B cell (primary cell): ENCODE measurements at regions of chr10 and their contacts with region 1.

Region 1: DNA sequence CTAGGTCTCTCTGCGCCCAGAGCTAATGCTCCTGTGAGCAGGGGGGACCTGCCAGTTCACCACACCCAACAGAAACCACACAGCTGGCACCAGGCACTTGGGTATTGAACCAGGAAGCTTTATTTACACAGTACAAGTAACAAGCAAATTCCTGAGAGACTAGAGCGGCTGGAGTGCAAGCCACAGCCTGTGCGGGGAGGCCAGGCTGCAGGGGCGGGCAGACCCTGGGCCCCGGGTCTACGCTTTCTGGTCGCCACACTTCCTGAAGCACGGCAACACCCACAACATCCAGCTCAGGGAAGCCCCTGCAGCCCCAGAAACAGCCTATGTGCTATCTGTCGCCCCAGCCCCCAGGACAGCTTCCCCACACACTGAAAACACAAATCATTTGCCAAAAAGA is 125.0 kb downstream of the FAM53B start:
- DNase-seq: peak; percentile 84
- ATAC-seq: peak; percentile 75
- H3K4me3 ChIP-seq: peak overlapping the region in 4 of 5 experiments; percentile 19 to 55 (median 28)
- H3K4me3 Mint-ChIP-seq: peak overlapping the region; percentile 87
- H3K27ac ChIP-seq: peak overlapping the region; percentile 97 to 98
- H3K27ac Mint-ChIP-seq: peak overlapping the region; percentile 99
- H3K4me1 ChIP-seq: peaks cover 96 to 100% of the 10 kb centered on the region in 2 donors
- H3K4me1 Mint-ChIP-seq: peaks cover 93% of the 10 kb centered on the region
- H3K27me3 ChIP-seq: no peaks in the 10 kb centered on the region
- H3K27me3 Mint-ChIP-seq: no peaks in the 10 kb centered on the region
- CTCF ChIP-seq: no peak

Region 2: DNA sequence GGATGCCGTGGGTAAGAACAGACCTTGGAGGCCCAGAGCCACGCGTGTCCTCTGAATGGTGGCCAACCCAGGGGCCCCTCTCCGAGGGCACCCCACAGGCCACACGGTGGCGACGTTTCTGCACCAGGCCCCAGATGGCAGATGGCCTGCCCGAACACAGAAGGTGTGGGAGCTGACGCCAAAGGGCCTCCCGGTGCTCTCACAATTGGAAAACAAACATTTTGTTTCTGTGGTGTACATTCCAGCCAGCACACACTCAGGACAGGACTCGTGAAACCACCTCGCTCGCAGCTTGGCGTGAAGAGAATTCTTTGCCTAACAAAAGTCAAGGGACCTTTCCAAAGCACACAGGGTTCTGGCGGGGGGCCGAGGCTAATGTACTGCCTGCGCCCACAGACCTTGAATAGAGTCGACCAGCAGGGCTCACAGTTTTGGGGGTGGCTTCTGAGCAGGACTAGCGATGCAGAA is 12.9 kb after region 1 on chr10:
- CTCF ChIA-PET with region 1: interaction called, 13 read pairs
- POLR2A ChIA-PET with region 1: interaction called, 7 read pairs
- intact Hi-C with region 1: loop called (anchors 1 kb)
- DNase-seq: peak; percentile 37
- ATAC-seq: no peak
- H3K4me3 ChIP-seq: no peak overlapping the region
- H3K4me3 Mint-ChIP-seq: peak overlapping the region; percentile 7
- H3K27ac ChIP-seq: peak overlapping the region; percentile 28 to 97
- H3K27ac Mint-ChIP-seq: peak overlapping the region; percentile 99
- H3K4me1 ChIP-seq: peaks cover 86 to 92% of the 10 kb centered on the region in 2 donors
- H3K4me1 Mint-ChIP-seq: peaks cover 88% of the 10 kb centered on the region
- H3K27me3 ChIP-seq: no peaks in the 10 kb centered on the region
- H3K27me3 Mint-ChIP-seq: no peaks in the 10 kb centered on the region
- CTCF ChIP-seq: no peak

Region 3: GRCh38 chr10:124641282-124642087 is 22.3 kb after region 1 on chr10:
- CTCF ChIA-PET with region 1: interaction called, 15 read pairs
- POLR2A ChIA-PET with region 1: interaction called, 15 read pairs
- intact Hi-C with region 1: loop called (anchors 2 kb)
- DNase-seq: peak; percentile 81
- ATAC-seq: peak; percentile 76
- H3K4me3 ChIP-seq: peak overlapping the region in 4 of 5 experiments; percentile 18 to 37 (median 20)
- H3K4me3 Mint-ChIP-seq: peak overlapping the region; percentile 83
- H3K27ac ChIP-seq: peak overlapping the region; percentile 86 to 92
- H3K27ac Mint-ChIP-seq: peak overlapping the region; percentile 94
- H3K4me1 ChIP-seq: peaks cover 99 to 100% of the 10 kb centered on the region in 2 donors
- H3K4me1 Mint-ChIP-seq: peaks cover 99% of the 10 kb centered on the region
- H3K27me3 ChIP-seq: no peaks in the 10 kb centered on the region
- H3K27me3 Mint-ChIP-seq: no peaks in the 10 kb centered on the region
- CTCF ChIP-seq: no peak

Region 4: GRCh38 chr10:124949543-124949942 is 330.3 kb after region 1 on chr10:
- CTCF ChIA-PET with region 1: no interaction called
- POLR2A ChIA-PET with region 1: no interaction called
- intact Hi-C with region 1: no loop called
- DNase-seq: no peak
- ATAC-seq: no peak
- H3K4me3 ChIP-seq: no peak overlapping the region
- H3K4me3 Mint-ChIP-seq: no peak overlapping the region
- H3K27ac ChIP-seq: no peak overlapping the region
- H3K27ac Mint-ChIP-seq: no peak overlapping the region
- H3K4me1 ChIP-seq: no peaks in the 10 kb centered on the region
- H3K4me1 Mint-ChIP-seq: peaks cover 30% of the 10 kb centered on the region
- H3K27me3 ChIP-seq: no peaks in the 10 kb centered on the region
- H3K27me3 Mint-ChIP-seq: no peaks in the 10 kb centered on the region
- CTCF ChIP-seq: no peak